Naive thymus-derived CD4-positive, alpha-beta T cell (primary cell): ENCODE measurements at regions of chr4 and their contacts with region 1.

Region 1: GRCh38 chr4:142743121-142743825 is 102.8 kb downstream of the INPP4B start:
- DNase-seq: no peak
- ATAC-seq: no peak
- H3K4me3 ChIP-seq: no peak overlapping the region
- H3K4me3 Mint-ChIP-seq: no peak overlapping the region
- H3K27ac ChIP-seq: no peak overlapping the region
- H3K27ac Mint-ChIP-seq: no peak overlapping the region
- H3K4me1 ChIP-seq: no peaks in the 10 kb centered on the region
- H3K4me1 Mint-ChIP-seq: no peaks in the 10 kb centered on the region
- H3K27me3 ChIP-seq: no peaks in the 10 kb centered on the region
- H3K27me3 Mint-ChIP-seq: no peaks in the 10 kb centered on the region

Region 2: GRCh38 chr4:142832022-142832421 is 88.7 kb after region 1 on chr4:
- CTCF ChIA-PET with region 1: no interaction called
- POLR2A ChIA-PET with region 1: no interaction called
- intact Hi-C with region 1: loop called in 1 of 2 experiments (anchors 5 kb)
- DNase-seq: no peak
- ATAC-seq: no peak
- H3K4me3 ChIP-seq: no peak overlapping the region
- H3K4me3 Mint-ChIP-seq: no peak overlapping the region
- H3K27ac ChIP-seq: no peak overlapping the region
- H3K27ac Mint-ChIP-seq: no peak overlapping the region
- H3K4me1 ChIP-seq: no peaks in the 10 kb centered on the region
- H3K4me1 Mint-ChIP-seq: no peaks in the 10 kb centered on the region
- H3K27me3 ChIP-seq: no peaks in the 10 kb centered on the region
- H3K27me3 Mint-ChIP-seq: peaks cover 0 to 3% (median 0%) of the 10 kb centered on the region in 5 donors

Region 3: DNA sequence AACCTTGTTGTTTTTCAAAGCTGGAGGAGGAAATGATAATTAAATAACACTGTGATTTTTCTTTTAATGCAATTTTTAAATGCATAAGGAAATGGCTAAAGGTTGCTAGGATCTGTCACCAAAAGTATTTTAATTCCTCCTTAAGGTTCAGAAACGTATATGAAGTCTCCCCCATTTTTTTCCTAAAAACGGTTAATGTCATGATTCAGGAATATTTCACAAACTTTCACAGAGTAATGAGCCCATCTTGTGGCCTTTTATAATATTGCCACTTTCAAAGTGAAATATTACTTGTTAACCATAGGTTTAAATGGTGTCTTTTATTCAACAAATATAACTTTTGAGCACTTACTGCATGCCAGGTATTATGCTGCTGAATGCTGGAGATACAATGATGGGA is 342.0 kb after region 1 on chr4:
- CTCF ChIA-PET with region 1: no interaction called
- POLR2A ChIA-PET with region 1: no interaction called
- intact Hi-C with region 1: no loop called
- DNase-seq: no peak
- ATAC-seq: no peak
- H3K4me3 ChIP-seq: no peak overlapping the region
- H3K4me3 Mint-ChIP-seq: no peak overlapping the region
- H3K27ac ChIP-seq: no peak overlapping the region
- H3K27ac Mint-ChIP-seq: no peak overlapping the region
- H3K4me1 ChIP-seq: no peaks in the 10 kb centered on the region
- H3K4me1 Mint-ChIP-seq: no peaks in the 10 kb centered on the region
- H3K27me3 ChIP-seq: no peaks in the 10 kb centered on the region
- H3K27me3 Mint-ChIP-seq: peaks cover 6 to 25% (median 14%) of the 10 kb centered on the region in 5 donors